Activated CD4-positive, alpha-beta T cell treated with anti-CD3 and anti-CD28 coated beads, Interleukin-2, amount 10 ng/mL, durations not matched to agents 24 days and 14 days (primary cell): ENCODE measurements at regions of chr7 and their contacts with region 1.

Region 1: DNA sequence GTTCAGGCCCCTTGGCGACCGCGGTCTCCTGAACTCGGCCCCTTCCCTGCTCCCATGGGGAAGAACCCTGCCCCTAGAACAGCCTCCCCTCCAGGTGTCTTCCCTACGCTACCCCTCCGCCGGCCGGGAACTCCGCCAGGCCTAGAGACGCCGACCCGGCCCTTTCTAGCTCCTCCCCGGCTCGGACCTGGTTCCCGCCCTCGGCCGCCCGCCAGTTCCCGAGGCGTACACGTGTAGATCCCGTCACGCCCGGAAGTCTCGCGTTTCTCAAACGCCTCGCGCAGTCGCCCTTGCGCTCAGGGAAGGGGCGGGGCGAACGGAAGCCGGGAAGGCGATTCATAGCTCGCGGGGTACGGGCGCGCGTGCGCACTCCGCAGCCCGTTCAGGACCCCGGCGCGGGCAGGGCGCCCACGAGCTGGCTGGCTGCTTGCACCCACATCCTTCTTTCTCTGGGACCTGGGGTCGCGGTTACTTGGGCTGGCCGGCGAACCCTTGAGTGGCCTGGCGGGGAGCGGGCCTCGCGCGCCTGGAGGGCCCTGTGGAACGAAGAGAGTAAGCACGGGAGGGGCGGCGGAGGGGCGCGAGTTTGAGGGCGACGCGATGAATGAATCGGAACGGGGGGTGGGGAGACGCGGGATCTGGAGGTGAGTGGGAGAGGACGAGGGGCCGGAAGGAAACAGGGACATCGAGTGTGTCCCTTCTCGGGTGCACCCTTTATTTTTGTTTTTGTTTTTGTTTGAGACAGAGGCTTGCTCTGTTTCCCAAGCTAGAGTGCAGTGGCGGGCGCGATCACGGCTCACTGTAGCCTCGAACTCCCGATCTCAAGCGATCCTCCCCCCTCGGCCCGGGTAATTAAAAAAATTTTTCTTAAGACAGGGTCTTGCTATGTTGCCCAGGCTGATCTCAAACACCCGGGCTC is at the start of gene POP7:
- DNase-seq: peak; percentile 100
- H3K4me3 Mint-ChIP-seq: peak within 1 kb of the TSS; percentile 99
- H3K27ac Mint-ChIP-seq: peak within 1 kb of the TSS; percentile 98
- H3K4me1 Mint-ChIP-seq: peaks cover 13% of the 10 kb centered on the region
- H3K27me3 Mint-ChIP-seq: peaks cover 7% of the 10 kb centered on the region
- total RNA-seq, gene POP7: 77.3 and 77.7 TPM in 2 replicates

Region 2: GRCh38 chr7:100611974-100612729 is 93.9 kb before region 1 on chr7 and contains the start of gene MOSPD3:
- intact Hi-C with region 1: loop called (anchors 5 kb)
- DNase-seq: peak; percentile 100
- H3K4me3 Mint-ChIP-seq: peak within 1 kb of the TSS; percentile 97
- H3K27ac Mint-ChIP-seq: peak within 1 kb of the TSS; percentile 100
- H3K4me1 Mint-ChIP-seq: peaks cover 18% of the 10 kb centered on the region
- H3K27me3 Mint-ChIP-seq: peaks cover 9% of the 10 kb centered on the region
- total RNA-seq, gene MOSPD3: 11.3 and 12.1 TPM in 2 replicates

Region 3: DNA sequence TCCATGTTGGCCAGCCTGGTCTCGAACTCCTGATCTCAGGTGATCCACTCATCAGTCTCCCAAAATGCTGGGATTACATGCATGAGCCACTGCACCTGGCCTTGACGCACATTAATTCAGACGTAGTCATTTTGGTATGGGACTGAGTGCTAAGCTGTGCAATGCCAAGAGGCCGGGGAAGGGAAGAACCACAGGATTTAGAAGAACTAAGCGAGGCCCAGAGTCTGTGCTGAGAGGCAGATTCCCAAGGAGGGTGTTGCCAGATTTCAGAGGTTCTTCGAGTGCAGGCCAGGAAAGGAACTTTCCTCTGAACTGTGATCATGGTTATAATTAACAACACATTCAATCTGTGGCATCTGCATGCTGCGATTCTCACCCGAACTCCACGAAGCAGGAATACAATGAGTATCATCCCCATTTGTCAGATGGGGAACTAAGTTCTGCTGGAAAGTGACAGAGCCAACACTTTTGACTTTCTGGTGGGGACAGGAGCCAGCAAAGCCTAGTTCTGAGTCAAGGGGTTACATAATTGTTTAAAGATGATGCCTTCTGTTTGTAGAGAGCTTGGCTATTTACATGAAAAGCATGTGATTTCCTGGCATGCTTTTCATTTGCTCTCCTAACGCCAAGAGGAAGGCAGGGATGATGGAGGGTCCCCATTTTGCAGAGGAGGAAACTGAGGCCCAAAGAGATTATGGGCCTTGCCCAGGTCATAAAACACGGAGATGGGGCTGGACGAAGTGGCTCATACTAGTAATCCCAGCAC is 21.2 kb after region 1 on chr7:
- intact Hi-C with region 1: loop called (anchors 1 kb)
- DNase-seq: no peak
- H3K4me3 Mint-ChIP-seq: no peak overlapping the region
- H3K27ac Mint-ChIP-seq: no peak overlapping the region
- H3K4me1 Mint-ChIP-seq: peaks cover 6% of the 10 kb centered on the region
- H3K27me3 Mint-ChIP-seq: peaks cover 15% of the 10 kb centered on the region